HEK293 (cell line): ENCODE measurements at regions of chr5 and their contacts with region 1.

Region 1: GRCh38 chr5:54492178-54492577 is 25.4 kb upstream of the SNX18 start:
- H3K4me3 ChIP-seq: no peak overlapping the region
- H3K27ac ChIP-seq: no peak overlapping the region
- H3K4me1 ChIP-seq: no peaks in the 10 kb centered on the region
- CTCF ChIP-seq: no peak

Region 2: GRCh38 chr5:54229041-54229780 is 263.0 kb before region 1 on chr5:
- CTCF ChIA-PET with region 1: interaction called, 32 read pairs
- POLR2A ChIA-PET with region 1: no interaction called
- H3K4me3 ChIP-seq: no peak overlapping the region
- H3K27ac ChIP-seq: no peak overlapping the region
- H3K4me1 ChIP-seq: no peaks in the 10 kb centered on the region; the same call in 1 of the 2 replicates
- CTCF ChIP-seq: no peak; the same call in 1 of the 2 replicates

Region 3: GRCh38 chr5:54243473-54244080 is 248.6 kb before region 1 on chr5:
- CTCF ChIA-PET with region 1: interaction called, 95 read pairs
- POLR2A ChIA-PET with region 1: no interaction called
- H3K4me3 ChIP-seq: no peak overlapping the region
- H3K27ac ChIP-seq: no peak overlapping the region
- H3K4me1 ChIP-seq: no peaks in the 10 kb centered on the region
- CTCF ChIP-seq: peak; percentile 17; the same call in 1 of the 2 replicates

Region 4: DNA sequence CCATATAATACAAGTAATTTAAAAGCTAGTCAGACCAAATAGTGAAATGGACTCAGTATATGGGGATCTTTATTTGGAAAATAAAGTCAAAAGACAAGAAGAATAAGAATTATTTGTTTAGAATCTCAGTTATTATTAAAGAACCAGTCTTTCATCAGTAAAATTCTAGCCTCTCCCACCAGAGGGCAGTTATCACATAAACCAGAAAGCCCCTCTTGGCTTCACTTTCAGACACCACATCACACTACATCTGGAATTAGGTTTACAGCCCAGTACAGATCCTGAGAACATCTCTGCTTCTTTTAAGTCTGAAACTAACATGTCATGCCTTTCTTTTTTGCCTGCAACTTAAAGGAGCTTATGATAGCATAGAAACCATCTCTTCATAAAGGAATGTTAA is 48.9 kb before region 1 on chr5:
- CTCF ChIA-PET with region 1: interaction called, 30 read pairs
- POLR2A ChIA-PET with region 1: no interaction called
- H3K4me3 ChIP-seq: no peak overlapping the region
- H3K27ac ChIP-seq: no peak overlapping the region
- H3K4me1 ChIP-seq: no peaks in the 10 kb centered on the region
- CTCF ChIP-seq: 0 out of 2 replicates have a peak, but pooled peaks have one; percentile 20

Region 5: DNA sequence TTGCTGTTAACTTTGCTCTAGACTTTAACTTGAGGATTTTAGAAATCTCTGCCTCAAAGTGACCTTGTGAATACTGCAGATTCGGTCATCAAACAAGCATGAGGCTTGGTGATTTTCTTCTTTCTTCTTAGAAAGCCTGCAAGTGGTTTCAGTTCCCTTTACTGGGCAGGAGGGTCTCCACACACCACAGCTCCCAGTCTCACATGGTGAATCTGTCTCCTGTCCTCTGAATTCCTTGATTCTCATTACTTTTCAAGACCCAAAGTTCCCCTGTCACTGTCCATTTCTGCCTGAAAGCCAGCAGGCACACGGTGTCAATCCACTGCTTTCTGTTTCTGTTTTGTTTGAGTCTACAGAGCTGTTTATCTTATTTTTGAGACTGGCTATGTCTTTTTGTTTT is 22.6 kb before region 1 on chr5:
- CTCF ChIA-PET with region 1: interaction called, 20 read pairs
- POLR2A ChIA-PET with region 1: no interaction called
- H3K4me3 ChIP-seq: no peak overlapping the region
- H3K27ac ChIP-seq: no peak overlapping the region
- H3K4me1 ChIP-seq: no peaks in the 10 kb centered on the region
- CTCF ChIP-seq: no peak

Region 6: GRCh38 chr5:54517174-54518092 is 25.3 kb after region 1 on chr5 and contains the start of gene SNX18:
- CTCF ChIA-PET with region 1: interaction called, 12 read pairs
- POLR2A ChIA-PET with region 1: no interaction called
- H3K4me3 ChIP-seq: peak within 1 kb of the TSS; percentile 83
- H3K27ac ChIP-seq: peak within 1 kb of the TSS; percentile 86
- H3K4me1 ChIP-seq: peaks cover 7% of the 10 kb centered on the region; the same call in 1 of the 2 replicates
- CTCF ChIP-seq: peak; percentile 90

Region 7: GRCh38 chr5:54533541-54534190 is 41.5 kb after region 1 on chr5:
- CTCF ChIA-PET with region 1: no interaction called
- POLR2A ChIA-PET with region 1: no interaction called
- H3K4me3 ChIP-seq: no peak overlapping the region
- H3K27ac ChIP-seq: no peak overlapping the region
- H3K4me1 ChIP-seq: peaks cover 3% of the 10 kb centered on the region; the same call in 1 of the 2 replicates
- CTCF ChIP-seq: no peak